Posterior vena cava (tissue), 2 donors: ENCODE measurements at regions of chr4 and their contacts with region 1.

Region 1: DNA sequence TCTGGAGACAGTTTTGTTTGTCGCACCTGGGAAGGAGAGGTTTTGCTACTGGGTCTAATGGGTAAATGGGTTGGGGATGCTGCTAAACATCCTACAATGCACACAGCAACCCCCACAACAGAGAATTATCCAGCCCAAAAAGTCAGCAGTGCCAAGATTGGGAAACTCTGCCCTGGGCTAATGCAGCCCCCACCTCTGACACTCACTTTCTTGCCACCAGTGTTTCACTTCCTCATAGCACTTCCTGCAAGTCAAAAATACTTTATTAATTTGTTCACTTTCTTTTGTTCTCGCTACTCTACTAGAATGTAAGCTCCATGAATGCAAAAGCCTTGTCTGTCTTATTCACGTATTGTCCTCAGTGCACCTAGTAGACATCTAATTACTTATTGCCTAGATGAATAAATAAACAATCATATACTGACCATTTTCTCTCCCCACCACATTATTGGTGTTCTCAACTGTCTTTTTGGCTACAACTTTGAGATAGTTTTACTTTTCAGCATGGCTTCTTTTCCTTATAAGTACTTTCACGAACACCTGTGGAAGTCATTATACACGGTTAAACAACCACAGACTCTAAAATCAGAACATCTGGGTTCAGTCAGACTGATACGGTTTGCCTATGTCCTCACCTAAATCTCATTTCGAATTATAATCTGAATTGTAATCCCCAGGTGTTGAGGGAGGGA is 82.0 kb upstream of the PITX2 start:
- DNase-seq: no peak

Region 2: GRCh38 chr4:108881190-108881589 is 1823.7 kb before region 1 on chr4:
- intact Hi-C with region 1: loop called in 1 of 2 experiments (anchors 5 kb)
- DNase-seq: no peak